ENCODE measurements at regions of chr17 and their contacts with region 1.

Region 1: DNA sequence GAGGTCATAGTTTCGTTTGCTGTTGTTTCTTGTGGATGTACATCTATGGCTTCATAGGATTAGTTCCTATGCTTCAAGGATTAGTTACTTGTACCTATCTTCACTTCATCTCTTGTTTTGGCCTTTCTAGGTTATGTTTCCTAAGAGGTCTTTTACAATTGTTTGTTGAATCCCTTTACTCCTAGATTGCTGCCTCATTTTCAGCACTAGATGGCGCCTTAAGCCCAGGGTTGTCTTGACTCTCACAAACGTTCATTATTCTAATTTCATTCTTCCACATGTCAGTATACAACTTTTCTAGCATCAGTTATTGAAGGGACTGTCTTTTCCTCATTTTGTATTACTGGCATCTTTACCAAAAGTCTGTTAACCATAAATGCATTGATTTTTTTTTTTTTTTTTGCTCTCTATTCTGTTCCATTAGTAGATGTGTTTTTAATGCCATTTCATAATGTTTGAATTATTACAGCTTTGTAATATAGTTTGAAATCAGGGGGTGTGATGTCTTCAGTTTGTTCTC is 45.0 kb upstream of the NACA2 start:
- DNase-seq: peak; percentile 60
- H3K4me3 ChIP-seq: no peak overlapping the region
- H3K27ac ChIP-seq: no peak overlapping the region
- H3K4me1 ChIP-seq: no peaks in the 10 kb centered on the region
- H3K27me3 ChIP-seq: no peaks in the 10 kb centered on the region

Region 2: DNA sequence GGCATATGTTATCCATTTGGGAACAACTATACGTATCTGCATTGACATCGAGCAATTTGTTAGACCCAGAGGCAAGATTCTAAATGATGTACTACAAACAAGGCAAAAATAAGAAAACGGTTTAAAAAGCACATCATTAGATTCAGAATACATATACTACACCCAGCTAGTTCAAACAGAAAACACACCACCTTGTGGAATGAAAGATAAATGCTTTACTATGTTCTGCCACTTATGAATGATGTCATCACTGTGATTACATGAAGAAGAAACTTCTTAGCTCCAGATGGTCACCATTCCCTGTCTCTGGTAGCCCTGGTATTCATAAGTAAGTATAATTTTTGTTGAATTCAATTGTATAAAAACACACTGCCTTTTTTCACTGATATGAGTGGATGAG is 52.7 kb before region 1 on chr17:
- in situ Hi-C with region 1: no loop called
- DNase-seq: peak; percentile 79
- H3K4me3 ChIP-seq: no peak overlapping the region
- H3K27ac ChIP-seq: no peak overlapping the region
- H3K4me1 ChIP-seq: no peaks in the 10 kb centered on the region
- H3K27me3 ChIP-seq: peaks cover 23% of the 10 kb centered on the region

Region 3: DNA sequence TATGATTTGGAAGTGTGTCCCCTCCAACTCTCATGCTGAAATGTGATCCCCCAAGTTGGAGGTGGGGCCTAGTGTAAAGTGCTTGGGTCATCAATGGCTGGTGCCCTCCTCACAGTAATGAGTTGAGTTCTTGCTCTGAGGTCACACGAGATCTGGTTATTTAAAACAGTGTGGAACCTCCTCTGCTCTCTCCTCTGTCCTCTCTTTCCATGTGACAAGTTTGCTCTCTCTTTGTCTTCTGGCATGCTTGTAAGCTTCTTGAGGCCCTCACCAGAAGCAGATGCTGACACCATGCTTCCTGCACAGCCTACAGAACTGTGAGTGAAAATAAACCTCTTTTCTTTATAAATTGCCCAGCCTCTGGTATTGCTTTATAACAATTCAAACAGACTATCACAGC is 207.5 kb after region 1 on chr17:
- in situ Hi-C with region 1: loop called (anchors 5 kb)
- DNase-seq: no peak
- H3K4me3 ChIP-seq: no peak overlapping the region
- H3K27ac ChIP-seq: no peak overlapping the region
- H3K4me1 ChIP-seq: no peaks in the 10 kb centered on the region
- H3K27me3 ChIP-seq: no peaks in the 10 kb centered on the region

Region 4: DNA sequence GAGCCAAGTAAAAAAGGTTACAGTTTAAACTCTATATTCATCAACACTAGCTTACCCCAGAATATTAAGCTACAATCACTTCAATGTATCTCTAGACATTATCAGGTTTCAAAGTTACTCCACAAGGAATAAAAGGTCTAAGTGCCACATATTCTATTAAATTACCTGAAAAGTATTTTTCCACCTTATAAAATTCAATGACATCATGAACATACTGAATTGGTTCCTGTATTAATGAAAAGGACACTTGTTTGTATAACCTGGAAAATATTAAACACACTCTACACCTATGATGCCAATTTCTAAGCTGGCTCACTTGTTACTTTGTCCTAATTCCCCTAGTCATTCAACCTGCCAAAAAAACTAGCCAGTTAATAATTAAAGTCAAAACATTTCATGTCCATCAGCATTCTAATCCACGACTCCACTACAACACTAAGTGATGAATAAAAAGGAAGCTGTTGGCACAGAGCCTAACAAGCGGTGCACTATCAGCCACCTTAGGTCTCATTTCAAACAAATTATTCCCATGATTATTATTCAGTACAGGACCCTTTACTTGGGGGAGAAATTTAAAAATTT is 416.9 kb after region 1 on chr17:
- in situ Hi-C with region 1: no loop called
- DNase-seq: no peak
- H3K4me3 ChIP-seq: no peak overlapping the region
- H3K27ac ChIP-seq: no peak overlapping the region
- H3K4me1 ChIP-seq: peaks cover 17% of the 10 kb centered on the region
- H3K27me3 ChIP-seq: no peaks in the 10 kb centered on the region

Region 5: GRCh38 chr17:62109378-62109902 is 473.5 kb after region 1 on chr17:
- in situ Hi-C with region 1: loop called (anchors 25 kb)
- DNase-seq: peak; percentile 85
- H3K4me3 ChIP-seq: no peak overlapping the region
- H3K27ac ChIP-seq: no peak overlapping the region
- H3K4me1 ChIP-seq: no peaks in the 10 kb centered on the region
- H3K27me3 ChIP-seq: peaks cover 6% of the 10 kb centered on the region; the same call in 1 of the 2 replicates

Measured in GM23248 (cell line).